Mammary epithelial cell (primary cell): ENCODE measurements at regions of chr3 and their contacts with region 1.

Region 1: GRCh38 chr3:62376906-62377877 is 3.8 kb upstream of the FEZF2 start:
- DNase-seq: no peak
- H3K4me3 ChIP-seq: no peak overlapping the region
- H3K27ac ChIP-seq: no peak overlapping the region
- H3K4me1 ChIP-seq: peaks cover 8% of the 10 kb centered on the region
- H3K27me3 ChIP-seq: peaks cover 75% of the 10 kb centered on the region
- CTCF ChIP-seq: no peak

Region 2: DNA sequence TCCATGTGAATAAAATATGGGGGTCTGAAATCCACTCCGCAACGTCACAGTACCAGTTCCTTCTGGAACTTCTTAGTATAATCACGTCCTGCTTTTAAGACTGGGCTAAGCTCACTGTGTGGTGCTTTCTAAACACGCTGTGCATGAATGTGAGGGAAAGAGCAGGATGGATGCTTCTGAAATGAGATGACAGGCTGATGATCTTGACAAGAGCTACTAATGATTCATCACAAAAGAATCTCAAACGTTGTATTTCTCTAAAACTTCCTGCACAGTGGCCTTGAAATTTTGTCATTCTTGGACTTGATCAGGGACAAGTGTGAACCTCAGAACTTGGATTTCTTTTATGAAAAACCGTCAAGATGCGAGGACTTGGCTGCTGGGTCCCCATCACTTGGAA is 276.6 kb after region 1 on chr3:
- CTCF ChIA-PET with region 1: interaction called, 19 read pairs
- dilution Hi-C with region 1: no loop called
- in situ Hi-C with region 1: no loop called
- intact Hi-C with region 1: no loop called
- DNase-seq: no peak
- H3K4me3 ChIP-seq: no peak overlapping the region
- H3K27ac ChIP-seq: no peak overlapping the region
- H3K4me1 ChIP-seq: no peaks in the 10 kb centered on the region
- H3K27me3 ChIP-seq: peaks cover 6% of the 10 kb centered on the region
- CTCF ChIP-seq: no peak